Activated B cell treated with CpG ODN at 0.5 μM for 24 hours (primary cell): ENCODE measurements at regions of chr1 and their contacts with region 1.

Region 1: DNA sequence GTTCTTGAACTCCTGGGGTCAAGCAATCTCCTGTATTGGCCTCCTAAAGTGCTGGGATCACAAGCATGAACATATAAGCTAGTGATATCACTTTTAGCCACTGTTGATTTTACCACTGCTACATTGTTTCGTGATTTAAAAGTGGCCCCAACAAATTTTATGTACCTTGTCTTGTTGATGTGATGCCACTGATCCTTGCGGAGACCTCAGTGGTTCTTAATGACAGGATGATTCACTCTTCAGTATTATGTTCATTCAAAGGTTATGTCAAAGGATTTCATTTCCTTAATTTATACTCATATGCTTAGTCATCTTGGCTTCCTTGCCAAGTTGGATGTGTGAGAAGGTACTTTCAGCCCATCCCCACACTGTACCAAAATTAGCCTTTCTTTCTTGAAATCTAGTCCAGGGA is 12.1 kb downstream of the PRKACB start:
- DNase-seq: no peak
- ATAC-seq: peak; percentile 76
- H3K4me3 Mint-ChIP-seq: no peak overlapping the region
- H3K27ac Mint-ChIP-seq: peak overlapping the region; percentile 15
- H3K4me1 Mint-ChIP-seq: peaks cover 83% of the 10 kb centered on the region
- H3K27me3 Mint-ChIP-seq: no peaks in the 10 kb centered on the region
- CTCF ChIP-seq: no peak

Region 2: GRCh38 chr1:84166797-84167196 is 10.6 kb after region 1 on chr1:
- CTCF ChIA-PET with region 1: interaction called, 3 read pairs
- POLR2A ChIA-PET with region 1: interaction called, 7 read pairs
- intact Hi-C with region 1: loop called (anchors 1 kb)
- DNase-seq: no peak
- ATAC-seq: peak; percentile 77
- H3K4me3 Mint-ChIP-seq: peak overlapping the region; percentile 1
- H3K27ac Mint-ChIP-seq: peak overlapping the region; percentile 42
- H3K4me1 Mint-ChIP-seq: peaks cover 70% of the 10 kb centered on the region
- H3K27me3 Mint-ChIP-seq: no peaks in the 10 kb centered on the region
- CTCF ChIP-seq: no peak

Region 3: GRCh38 chr1:84174051-84174556 is 17.9 kb after region 1 on chr1:
- CTCF ChIA-PET with region 1: no interaction called
- POLR2A ChIA-PET with region 1: no interaction called
- intact Hi-C with region 1: loop called (anchors 1 kb)
- DNase-seq: no peak
- ATAC-seq: no peak
- H3K4me3 Mint-ChIP-seq: no peak overlapping the region
- H3K27ac Mint-ChIP-seq: no peak overlapping the region
- H3K4me1 Mint-ChIP-seq: peaks cover 36% of the 10 kb centered on the region
- H3K27me3 Mint-ChIP-seq: no peaks in the 10 kb centered on the region
- CTCF ChIP-seq: no peak